Caco-2 (cell line): ENCODE measurements at regions of chr20 and their contacts with region 1.

Region 1: GRCh38 chr20:17682103-17682888 is at the start of gene RRBP1:
- DNase-seq: peak; percentile 99
- H3K4me3 ChIP-seq: peak within 1 kb of the TSS; percentile 92
- H3K4me3 Mint-ChIP-seq: peak within 1 kb of the TSS; percentile 85
- H3K27ac Mint-ChIP-seq: peak within 1 kb of the TSS; percentile 95
- H3K4me1 ChIP-seq: peaks cover 60% of the 10 kb centered on the region
- H3K4me1 Mint-ChIP-seq: peaks cover 68% of the 10 kb centered on the region
- H3K27me3 ChIP-seq: no peaks in the 10 kb centered on the region
- H3K27me3 Mint-ChIP-seq: no peaks in the 10 kb centered on the region
- CTCF ChIP-seq: peak; percentile 82 to 85
- total RNA-seq, gene RRBP1: 665 and 758 TPM in 2 replicates

Region 2: DNA sequence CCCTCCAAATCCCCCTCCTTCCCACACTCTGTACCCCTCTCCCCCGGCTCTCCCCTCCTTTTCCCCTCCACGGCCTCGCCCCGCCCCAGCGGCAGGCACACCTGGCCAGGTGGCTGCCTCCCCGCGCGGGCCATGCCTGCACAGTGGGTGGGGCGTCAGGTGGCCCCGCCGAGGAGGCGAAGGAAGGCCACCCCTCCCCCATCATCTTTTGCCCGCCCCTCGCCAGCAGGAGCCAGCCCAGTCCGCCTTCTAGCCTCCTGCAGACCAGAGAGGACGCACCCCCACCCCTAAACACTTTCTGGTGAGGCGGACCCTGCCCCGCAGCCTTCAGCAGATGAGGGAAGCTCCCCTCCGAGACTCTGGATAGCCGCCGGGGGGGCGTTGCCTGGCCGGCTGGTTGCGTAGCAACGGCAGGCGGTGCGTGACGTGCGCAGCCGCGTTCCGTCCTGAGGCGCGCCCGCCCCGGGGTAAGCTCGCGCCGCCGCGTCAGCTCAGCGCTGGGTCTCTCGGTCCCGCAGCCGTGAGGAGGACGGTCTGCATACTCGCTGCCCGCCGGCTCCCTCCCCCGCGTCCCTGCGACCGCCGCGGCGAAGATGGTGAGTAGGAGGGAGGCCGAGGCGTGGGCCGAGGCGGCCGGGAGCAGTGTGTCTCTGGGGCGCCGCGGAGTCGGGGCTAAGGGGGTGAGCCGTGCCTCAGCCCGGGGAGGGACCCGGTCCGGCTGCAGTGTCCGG is 112.5 kb before region 1 on chr20 and contains the start of gene DSTN:
- CTCF ChIA-PET with region 1: no interaction called
- POLR2A ChIA-PET with region 1: interaction called, 10 read pairs
- intact Hi-C with region 1: no loop called
- DNase-seq: peak; percentile 99 to 100
- H3K4me3 ChIP-seq: peak within 1 kb of the TSS; percentile 98
- H3K4me3 Mint-ChIP-seq: peak within 1 kb of the TSS; percentile 73
- H3K27ac Mint-ChIP-seq: peak within 1 kb of the TSS; percentile 87
- H3K4me1 ChIP-seq: peaks cover 23% of the 10 kb centered on the region
- H3K4me1 Mint-ChIP-seq: peaks cover 32% of the 10 kb centered on the region
- H3K27me3 ChIP-seq: no peaks in the 10 kb centered on the region
- H3K27me3 Mint-ChIP-seq: no peaks in the 10 kb centered on the region
- CTCF ChIP-seq: no peak
- total RNA-seq, gene DSTN: 313 and 318 TPM in 2 replicates

Region 3: DNA sequence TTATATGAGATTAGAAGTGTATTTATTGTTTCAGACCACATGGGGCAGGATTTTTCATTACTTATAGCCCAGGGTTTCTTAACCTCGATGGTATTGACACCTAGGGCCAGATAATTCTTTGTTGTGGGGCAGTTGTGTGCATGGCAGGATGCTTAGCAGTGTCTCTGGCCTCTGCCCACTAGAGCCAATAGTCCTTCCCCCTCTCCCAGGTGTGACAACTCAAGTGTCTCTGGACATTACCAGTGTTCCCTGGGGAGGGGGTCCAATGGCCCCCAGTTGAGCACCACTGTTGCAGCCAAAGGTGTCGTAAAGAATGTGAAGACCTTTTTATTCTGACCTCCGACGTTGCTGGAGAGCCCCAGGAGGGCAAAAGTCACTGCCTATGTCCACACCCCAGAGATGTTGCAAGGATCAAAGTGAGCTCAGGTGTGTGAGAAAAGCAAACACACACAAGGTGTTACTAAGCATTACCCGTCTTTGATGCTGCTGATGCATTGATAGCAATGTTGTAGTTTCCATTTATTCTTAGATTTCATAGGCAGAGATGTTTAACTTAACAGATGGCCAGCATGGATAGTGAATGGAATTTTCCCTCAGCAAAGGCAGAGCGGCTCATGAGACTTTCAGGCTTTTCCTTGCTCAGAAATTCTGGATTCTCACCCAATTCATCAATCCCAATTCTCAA is 39.6 kb after region 1 on chr20:
- CTCF ChIA-PET with region 1: interaction called, 12 read pairs
- POLR2A ChIA-PET with region 1: interaction called, 24 read pairs
- intact Hi-C with region 1: loop called (anchors 1 kb)
- DNase-seq: peak; percentile 95 to 98
- H3K4me3 ChIP-seq: no peak overlapping the region
- H3K4me3 Mint-ChIP-seq: peak overlapping the region; percentile 48
- H3K27ac Mint-ChIP-seq: peak overlapping the region; percentile 95
- H3K4me1 ChIP-seq: peaks cover 50% of the 10 kb centered on the region
- H3K4me1 Mint-ChIP-seq: peaks cover 49% of the 10 kb centered on the region
- H3K27me3 ChIP-seq: no peaks in the 10 kb centered on the region
- H3K27me3 Mint-ChIP-seq: no peaks in the 10 kb centered on the region
- CTCF ChIP-seq: peak; percentile 21 to 58

Region 4: GRCh38 chr20:17875106-17875980 is 193.0 kb after region 1 on chr20:
- CTCF ChIA-PET with region 1: no interaction called
- POLR2A ChIA-PET with region 1: no interaction called
- intact Hi-C with region 1: loop called (anchors 5 kb)
- DNase-seq: peak; percentile 51 to 61
- H3K4me3 ChIP-seq: no peak overlapping the region
- H3K4me3 Mint-ChIP-seq: no peak overlapping the region
- H3K27ac Mint-ChIP-seq: no peak overlapping the region
- H3K4me1 ChIP-seq: peaks cover 50% of the 10 kb centered on the region
- H3K4me1 Mint-ChIP-seq: peaks cover 43% of the 10 kb centered on the region
- H3K27me3 ChIP-seq: no peaks in the 10 kb centered on the region
- H3K27me3 Mint-ChIP-seq: no peaks in the 10 kb centered on the region
- CTCF ChIP-seq: no peak

Region 5: DNA sequence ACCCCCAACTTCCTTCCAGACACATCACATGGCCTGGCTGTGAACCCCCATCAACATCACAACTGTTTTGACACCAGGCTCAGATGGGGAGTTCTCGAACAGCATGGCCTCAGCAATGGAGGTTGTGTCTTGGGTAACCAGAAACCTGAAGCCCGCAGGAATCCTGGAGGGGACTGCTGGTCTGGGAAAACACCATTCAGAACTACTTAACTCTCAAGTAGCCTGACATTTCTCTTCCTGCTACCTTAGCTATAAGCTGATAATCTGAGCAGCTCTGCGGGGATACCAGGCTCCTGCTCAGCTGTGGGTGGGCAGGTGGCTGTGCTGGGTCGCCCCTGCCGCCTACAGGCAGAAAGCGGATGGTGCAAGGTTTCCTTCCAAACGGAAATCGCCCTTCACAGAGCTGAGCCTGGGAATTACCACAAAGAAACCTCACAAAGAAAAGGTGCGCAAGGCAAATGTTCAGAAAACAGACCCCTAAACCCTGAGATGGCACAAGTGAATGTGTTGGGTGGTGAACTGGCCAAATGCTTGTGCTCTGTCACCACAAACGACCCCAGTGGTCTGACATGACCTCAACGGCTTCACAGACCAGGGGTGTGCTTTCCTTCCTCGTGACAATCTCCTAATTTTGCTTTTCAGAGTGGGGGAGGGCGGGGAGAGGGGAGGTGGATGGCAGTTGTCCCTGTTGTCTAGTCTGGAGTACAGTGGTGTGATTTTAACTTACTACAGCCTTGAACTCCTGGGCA is 256.7 kb after region 1 on chr20:
- CTCF ChIA-PET with region 1: interaction called, 26 read pairs
- POLR2A ChIA-PET with region 1: interaction called, 12 read pairs
- intact Hi-C with region 1: no loop called
- DNase-seq: peak; percentile 75 to 83
- H3K4me3 ChIP-seq: no peak overlapping the region
- H3K4me3 Mint-ChIP-seq: no peak overlapping the region
- H3K27ac Mint-ChIP-seq: peak overlapping the region; percentile 66
- H3K4me1 ChIP-seq: no peaks in the 10 kb centered on the region
- H3K4me1 Mint-ChIP-seq: no peaks in the 10 kb centered on the region
- H3K27me3 ChIP-seq: no peaks in the 10 kb centered on the region
- H3K27me3 Mint-ChIP-seq: no peaks in the 10 kb centered on the region
- CTCF ChIP-seq: peak; percentile 94 to 96

Region 6: DNA sequence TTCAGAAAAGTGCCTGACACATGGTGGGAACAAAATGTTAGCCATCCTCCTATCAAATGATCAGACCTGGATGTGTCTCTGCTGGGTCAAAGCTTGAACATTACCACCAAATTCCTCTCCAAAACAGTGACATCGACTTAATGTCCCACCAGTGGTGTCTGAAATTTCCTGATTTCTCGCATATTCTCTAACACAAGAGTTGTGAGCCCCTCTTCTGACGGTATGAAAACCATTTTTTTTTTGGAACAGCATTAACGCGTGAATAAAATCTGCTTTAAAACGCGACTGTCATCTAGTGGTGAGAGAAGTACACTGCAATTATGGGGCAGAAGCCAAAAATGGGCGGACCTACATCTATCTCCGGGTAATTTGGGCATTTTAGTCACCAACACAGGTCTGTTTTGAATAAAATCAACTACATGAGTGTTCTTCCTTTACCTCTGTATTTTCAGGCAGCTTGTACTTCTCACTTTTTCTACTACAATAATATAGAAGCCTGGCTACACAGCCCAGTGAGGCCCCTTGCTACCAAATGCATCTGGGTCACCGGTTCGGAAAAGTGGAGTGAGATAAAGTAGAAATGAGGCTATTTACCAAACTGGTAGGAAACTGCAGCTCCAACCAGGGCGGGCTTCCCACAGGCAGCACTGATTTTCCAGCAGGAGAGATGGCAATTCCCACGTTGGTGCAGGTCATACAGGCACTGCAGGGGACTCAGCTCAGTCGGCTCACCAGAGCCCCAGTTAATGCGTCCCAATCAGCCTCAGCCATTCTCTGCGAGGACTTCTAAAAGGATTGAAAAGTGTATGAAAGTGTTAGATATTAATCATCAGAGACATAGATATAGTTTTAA is 313.9 kb after region 1 on chr20:
- CTCF ChIA-PET with region 1: no interaction called
- POLR2A ChIA-PET with region 1: no interaction called
- intact Hi-C with region 1: loop called (anchors 10 kb)
- DNase-seq: peak in 1 of 2 experiments; percentile 59
- H3K4me3 ChIP-seq: no peak overlapping the region
- H3K4me3 Mint-ChIP-seq: no peak overlapping the region
- H3K27ac Mint-ChIP-seq: no peak overlapping the region
- H3K4me1 ChIP-seq: peaks cover 6% of the 10 kb centered on the region
- H3K4me1 Mint-ChIP-seq: peaks cover 12% of the 10 kb centered on the region
- H3K27me3 ChIP-seq: no peaks in the 10 kb centered on the region
- H3K27me3 Mint-ChIP-seq: no peaks in the 10 kb centered on the region
- CTCF ChIP-seq: peak; percentile 88 to 94